ENCODE measurements at regions of chr10 and their contacts with region 1.

Region 1: GRCh38 chr10:123043409-123043925 is 34.7 kb downstream of the ACADSB start:
- DNase-seq: peak; percentile 83
- H3K4me3 Mint-ChIP-seq: no peak overlapping the region
- H3K27ac Mint-ChIP-seq: no peak overlapping the region
- H3K4me1 Mint-ChIP-seq: peaks cover 7% of the 10 kb centered on the region
- H3K27me3 Mint-ChIP-seq: no peaks in the 10 kb centered on the region

Region 2: GRCh38 chr10:123559066-123559822 is 515.8 kb after region 1 on chr10:
- intact Hi-C with region 1: loop called (anchors 1 kb)
- DNase-seq: peak; percentile 89
- H3K4me3 Mint-ChIP-seq: no peak overlapping the region
- H3K27ac Mint-ChIP-seq: no peak overlapping the region
- H3K4me1 Mint-ChIP-seq: no peaks in the 10 kb centered on the region
- H3K27me3 Mint-ChIP-seq: peaks cover 3% of the 10 kb centered on the region

Measured in activated CD4-positive, alpha-beta T cell treated with anti-CD3 and anti-CD28 coated beads, Interleukin-2, amount 10 ng/mL, durations not matched to agents 24 days and 14 days (primary cell).